ENCODE measurements at regions of chr16 and their contacts with region 1.

Region 1: DNA sequence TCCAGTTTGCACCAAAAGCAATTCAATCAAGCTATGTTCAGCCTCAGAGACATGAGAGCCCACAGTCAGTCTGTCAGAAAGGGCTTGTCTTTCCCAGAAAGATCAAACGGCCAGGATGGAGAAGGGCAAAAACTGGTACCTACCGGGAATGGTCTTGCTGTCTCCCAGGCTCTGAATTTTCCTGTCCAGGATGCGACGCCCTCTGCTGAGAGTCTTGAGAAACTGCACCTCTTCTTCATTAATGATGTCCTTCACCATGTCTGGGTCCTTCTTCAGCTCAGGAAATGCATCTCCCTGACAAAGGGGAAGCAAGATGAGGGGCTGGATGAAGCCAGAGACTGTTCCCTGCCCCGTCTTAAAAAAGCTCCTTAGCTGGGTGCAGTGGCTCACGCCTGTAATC is 15.8 kb upstream of the EXOSC6 start:
- DNase-seq: peak; percentile 36 to 62 (median 40)
- ATAC-seq: peak; percentile 78
- H3K4me3 ChIP-seq: no peak overlapping the region
- H3K27ac ChIP-seq: no peak overlapping the region
- H3K4me1 ChIP-seq: no peaks in the 10 kb centered on the region
- H3K27me3 ChIP-seq: no peaks in the 10 kb centered on the region
- CTCF ChIP-seq: peak; percentile 55 to 73 (median 56)
- EP300 ChIP-seq: no peak
- POLR2A ChIP-seq: no peak
- RAD21 ChIP-seq: no peak

Region 2: GRCh38 chr16:69726296-69727060 is 541.0 kb before region 1 on chr16 and contains the start of gene NQO1:
- CTCF ChIA-PET with region 1: no interaction called
- POLR2A ChIA-PET with region 1: no interaction called
- in situ Hi-C with region 1: no loop called
- intact Hi-C with region 1: no loop called
- DNase-seq: peak; percentile 95 to 98 (median 96)
- ATAC-seq: peak; percentile 94
- H3K4me3 ChIP-seq: peak within 1 kb of the TSS; percentile 52
- H3K27ac ChIP-seq: peak within 1 kb of the TSS; percentile 97
- H3K4me1 ChIP-seq: peaks cover 26 to 44% of the 10 kb centered on the region in 2 experiments; a peak in 4 of 5 replicates
- H3K27me3 ChIP-seq: no peaks in the 10 kb centered on the region; a peak in 1 of 5 replicates
- CTCF ChIP-seq: 0 out of 6 replicates have a peak, but pooled peaks of 1 of the 3 experiments have one; percentile 1
- EP300 ChIP-seq: peak; percentile 24
- POLR2A ChIP-seq: peak; percentile 89
- RAD21 ChIP-seq: no peak
- polyA plus RNA-seq, gene NQO1: 96.7 to 152 TPM

Region 3: DNA sequence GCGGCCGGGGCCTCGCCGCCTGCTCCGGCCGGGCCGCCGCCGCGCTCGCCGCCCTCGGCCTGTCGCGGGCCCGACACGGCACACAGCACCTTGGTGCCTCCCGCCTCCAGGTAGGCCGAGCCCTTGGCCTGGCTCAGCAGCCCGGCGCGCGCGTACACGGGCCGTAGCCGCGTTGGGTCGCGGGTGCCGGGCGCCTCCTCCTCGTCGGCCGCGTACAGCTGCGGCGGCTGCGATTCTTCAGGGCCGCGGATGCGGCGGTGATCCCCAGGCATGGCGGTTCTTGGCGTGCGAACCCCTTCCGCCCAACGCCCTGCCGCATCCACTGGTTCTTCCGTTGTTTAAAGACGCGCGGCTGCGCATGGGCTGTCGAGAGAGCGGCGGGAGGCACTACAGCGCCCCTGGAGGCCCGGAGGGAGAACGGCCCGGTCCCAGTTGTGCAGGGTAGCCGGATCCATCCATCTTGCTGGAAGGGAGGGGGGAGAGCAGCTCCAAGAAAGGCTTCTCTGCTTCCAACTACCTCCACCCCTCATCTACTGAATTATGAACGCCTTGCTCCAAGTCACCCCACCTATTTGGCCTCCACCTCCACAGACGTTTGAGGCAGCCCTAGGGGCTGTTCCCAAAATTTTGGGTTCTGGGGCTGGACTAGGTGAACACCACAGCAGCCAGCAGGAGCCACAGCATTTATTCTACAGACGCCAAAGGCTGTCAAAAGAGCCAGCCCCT is 15.7 kb before region 1 on chr16 and contains the start of gene EXOSC6:
- CTCF ChIA-PET with region 1: no interaction called
- POLR2A ChIA-PET with region 1: interaction called, 57 read pairs
- in situ Hi-C with region 1: no loop called
- intact Hi-C with region 1: no loop called
- DNase-seq: peak; percentile 91 to 96 (median 93)
- ATAC-seq: peak; percentile 91
- H3K4me3 ChIP-seq: peak within 1 kb of the TSS; percentile 85
- H3K27ac ChIP-seq: peak within 1 kb of the TSS; percentile 93
- H3K4me1 ChIP-seq: peaks cover 5 to 20% of the 10 kb centered on the region in 2 experiments; a peak in 4 of 5 replicates
- H3K27me3 ChIP-seq: no peaks in the 10 kb centered on the region
- CTCF ChIP-seq: peak; percentile 91 to 95 (median 92)
- EP300 ChIP-seq: no peak
- POLR2A ChIP-seq: peak; percentile 94
- RAD21 ChIP-seq: no peak
- polyA plus RNA-seq, gene EXOSC6: 9.2 to 11.6 TPM

Region 4: GRCh38 chr16:70454222-70455034 is 186.9 kb after region 1 on chr16 and contains the start of gene FCSK:
- CTCF ChIA-PET with region 1: no interaction called
- POLR2A ChIA-PET with region 1: no interaction called
- in situ Hi-C with region 1: no loop called
- intact Hi-C with region 1: no loop called
- DNase-seq: peak; percentile 80 to 84 (median 83)
- ATAC-seq: peak; percentile 93
- H3K4me3 ChIP-seq: peak within 1 kb of the TSS; percentile 95
- H3K27ac ChIP-seq: peak within 1 kb of the TSS; percentile 97
- H3K4me1 ChIP-seq: peaks cover 10 to 23% of the 10 kb centered on the region in 2 experiments; a peak in 4 of 5 replicates
- H3K27me3 ChIP-seq: no peaks in the 10 kb centered on the region
- CTCF ChIP-seq: peak in 1 of 3 experiments; percentile 29; a peak in 1 of 6 replicates
- EP300 ChIP-seq: no peak; the same call in 1 of the 2 replicates
- POLR2A ChIP-seq: peak; percentile 28; the same call in 1 of the 2 replicates
- RAD21 ChIP-seq: peak in 1 of 2 experiments; percentile 19; a peak in 1 of 4 replicates
- polyA plus RNA-seq, gene FCSK: 0.92 to 1.1 TPM

Region 5: DNA sequence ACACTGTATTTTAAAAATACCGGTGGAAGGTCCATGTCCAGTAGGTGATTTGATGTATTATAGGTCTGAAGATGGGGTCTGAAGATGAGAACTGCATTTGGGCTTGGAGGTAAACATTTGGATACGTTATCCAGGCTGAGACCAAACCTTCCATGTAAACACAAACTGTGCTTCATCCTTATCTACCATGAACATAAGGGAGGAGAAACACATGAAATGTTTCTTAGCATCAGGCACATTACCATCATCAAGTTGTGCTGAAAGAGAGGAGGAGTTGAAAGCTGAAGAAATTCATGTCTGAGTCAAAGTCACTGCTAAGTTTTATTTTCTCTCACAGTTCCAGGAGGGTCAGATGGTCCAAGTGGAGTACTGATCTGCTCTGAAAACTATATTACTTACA is 267.5 kb after region 1 on chr16:
- CTCF ChIA-PET with region 1: no interaction called
- POLR2A ChIA-PET with region 1: no interaction called
- in situ Hi-C with region 1: loop called (anchors 10 kb)
- intact Hi-C with region 1: loop called (anchors 10 kb)
- DNase-seq: peak; percentile 27 to 32 (median 28)
- ATAC-seq: peak; percentile 59
- H3K4me3 ChIP-seq: no peak overlapping the region
- H3K27ac ChIP-seq: no peak overlapping the region
- H3K4me1 ChIP-seq: peaks cover 0 to 4% of the 10 kb centered on the region in 2 experiments; a peak in 1 of 5 replicates
- H3K27me3 ChIP-seq: no peaks in the 10 kb centered on the region
- CTCF ChIP-seq: no peak
- EP300 ChIP-seq: no peak
- POLR2A ChIP-seq: no peak
- RAD21 ChIP-seq: no peak

Region 6: DNA sequence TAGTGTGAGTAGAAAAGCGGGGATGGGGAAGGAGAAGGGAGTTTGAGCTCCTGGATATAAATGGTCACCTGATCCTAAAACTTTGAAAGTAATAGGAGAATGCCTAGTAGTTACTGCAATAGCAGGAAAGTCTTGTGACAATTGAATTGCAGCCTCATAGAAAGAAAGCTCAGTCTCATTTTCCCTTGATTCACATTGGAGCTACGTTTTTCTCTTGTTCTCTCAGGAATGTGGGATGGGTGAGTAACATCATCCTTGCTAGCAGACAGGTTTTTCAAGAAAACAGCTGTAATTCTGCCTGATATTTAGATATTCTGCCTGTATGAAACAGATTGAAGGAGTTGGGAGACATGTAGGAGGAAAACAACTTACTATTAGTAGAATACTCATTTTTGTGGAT is 281.4 kb after region 1 on chr16:
- CTCF ChIA-PET with region 1: no interaction called
- POLR2A ChIA-PET with region 1: no interaction called
- in situ Hi-C with region 1: loop called (anchors 10 kb)
- intact Hi-C with region 1: no loop called
- DNase-seq: no peak
- ATAC-seq: no peak
- H3K4me3 ChIP-seq: no peak overlapping the region
- H3K27ac ChIP-seq: no peak overlapping the region
- H3K4me1 ChIP-seq: no peaks in the 10 kb centered on the region
- H3K27me3 ChIP-seq: no peaks in the 10 kb centered on the region
- CTCF ChIP-seq: no peak
- EP300 ChIP-seq: no peak
- POLR2A ChIP-seq: no peak
- RAD21 ChIP-seq: no peak